ENCODE measurements at regions of chr6 and their contacts with region 1.

Region 1: GRCh38 chr6:112235956-112236355 is 18.4 kb downstream of the LAMA4 start:
- DNase-seq: peak; percentile 75
- H3K4me3 Mint-ChIP-seq: no peak overlapping the region
- H3K27ac Mint-ChIP-seq: no peak overlapping the region
- H3K4me1 Mint-ChIP-seq: peaks cover 24% of the 10 kb centered on the region
- H3K27me3 Mint-ChIP-seq: peaks cover 63% of the 10 kb centered on the region

Region 2: DNA sequence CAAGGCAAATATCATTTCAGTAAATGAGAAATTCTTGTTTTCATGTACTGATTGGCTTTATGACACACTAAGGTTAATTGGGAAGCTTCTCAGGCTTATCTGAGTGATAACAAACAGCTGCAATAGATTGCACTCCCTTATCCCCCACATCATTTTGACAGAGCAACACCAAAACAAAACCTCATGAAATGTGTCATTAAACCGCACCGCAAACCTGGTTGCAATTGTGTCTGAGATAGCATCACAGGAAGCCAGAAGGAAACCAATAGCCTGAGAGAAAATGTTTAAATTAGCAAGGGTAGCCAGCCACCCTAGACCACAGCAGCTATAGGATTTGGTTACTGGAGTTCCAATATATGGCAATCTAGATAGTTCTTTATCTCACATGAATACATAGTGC is 50.1 kb after region 1 on chr6:
- CTCF ChIA-PET with region 1: interaction called, 7 read pairs
- POLR2A ChIA-PET with region 1: interaction called, 10 read pairs
- DNase-seq: peak; percentile 81
- H3K4me3 Mint-ChIP-seq: no peak overlapping the region
- H3K27ac Mint-ChIP-seq: no peak overlapping the region
- H3K4me1 Mint-ChIP-seq: peaks cover 37% of the 10 kb centered on the region
- H3K27me3 Mint-ChIP-seq: peaks cover 68% of the 10 kb centered on the region